Thyroid gland (tissue), 4 donors: ENCODE measurements at regions of chr3 and their contacts with region 1.

Region 1: DNA sequence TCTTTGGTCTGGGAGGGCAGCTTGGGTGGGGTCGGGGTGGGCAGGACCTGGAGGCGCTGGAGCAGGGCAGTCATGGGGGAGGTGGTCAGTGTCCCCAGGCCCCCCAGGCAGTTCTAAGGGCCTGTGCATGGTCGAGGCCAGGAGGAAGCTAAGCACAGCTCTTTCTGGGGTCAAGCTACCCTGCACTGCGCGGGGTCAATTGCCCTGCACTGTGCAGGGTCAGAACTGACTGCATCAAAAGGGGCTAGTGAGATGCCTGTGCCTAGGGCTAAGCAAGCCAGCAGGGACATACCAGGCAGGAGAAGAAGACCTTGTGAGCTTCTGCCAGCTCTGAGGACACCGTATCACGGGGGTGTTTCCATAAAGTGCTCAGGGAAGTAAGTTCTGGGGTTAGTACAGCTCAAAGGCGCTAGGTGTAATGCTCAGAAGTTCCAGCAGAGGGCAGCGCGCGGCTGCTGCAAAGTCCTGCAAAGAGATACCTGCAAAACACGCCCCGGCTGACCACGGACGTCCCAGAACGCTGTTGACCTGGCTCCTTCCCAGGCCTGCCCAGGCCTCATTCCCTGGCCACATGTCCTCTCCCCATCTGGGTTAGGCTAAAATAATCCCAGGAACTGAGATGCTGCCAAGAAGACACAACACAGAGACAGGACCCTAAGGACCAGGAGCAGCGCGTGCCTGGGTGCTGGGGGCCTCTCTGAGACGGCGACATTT is 18.8 kb upstream of the IQSEC1 start:
- DNase-seq: peak; percentile 85 to 88
- H3K4me3 ChIP-seq: no peak overlapping the region
- H3K27ac ChIP-seq: no peak overlapping the region
- H3K4me1 ChIP-seq: peaks cover 0 to 8% of the 10 kb centered on the region in 2 donors
- H3K27me3 ChIP-seq: no peaks in the 10 kb centered on the region
- CTCF ChIP-seq: peak; percentile 84 to 97 (median 93)
- POLR2A ChIP-seq: no peak

Region 2: GRCh38 chr3:13452490-13453335 is 360.7 kb after region 1 on chr3:
- intact Hi-C with region 1: loop called (anchors 5 kb)
- DNase-seq: peak; percentile 21 to 24
- H3K4me3 ChIP-seq: no peak overlapping the region
- H3K27ac ChIP-seq: peak overlapping the region; percentile 87 to 89 (median 88)
- H3K4me1 ChIP-seq: peaks cover 0 to 5% of the 10 kb centered on the region in 2 donors
- H3K27me3 ChIP-seq: no peaks in the 10 kb centered on the region
- CTCF ChIP-seq: peak in 5 of 6 experiments; percentile 27 to 65 (median 63)
- POLR2A ChIP-seq: no peak

Region 3: GRCh38 chr3:13648060-13649001 is 556.3 kb after region 1 on chr3:
- intact Hi-C with region 1: loop called (anchors 5 kb)
- DNase-seq: peak; percentile 79 to 82
- H3K4me3 ChIP-seq: no peak overlapping the region
- H3K27ac ChIP-seq: no peak overlapping the region
- H3K4me1 ChIP-seq: peaks cover 0 to 7% of the 10 kb centered on the region in 2 donors
- H3K27me3 ChIP-seq: no peaks in the 10 kb centered on the region
- CTCF ChIP-seq: peak; percentile 86 to 99 (median 92)
- POLR2A ChIP-seq: no peak